ENCODE measurements at regions of chr3 and their contacts with region 1.

Region 1: DNA sequence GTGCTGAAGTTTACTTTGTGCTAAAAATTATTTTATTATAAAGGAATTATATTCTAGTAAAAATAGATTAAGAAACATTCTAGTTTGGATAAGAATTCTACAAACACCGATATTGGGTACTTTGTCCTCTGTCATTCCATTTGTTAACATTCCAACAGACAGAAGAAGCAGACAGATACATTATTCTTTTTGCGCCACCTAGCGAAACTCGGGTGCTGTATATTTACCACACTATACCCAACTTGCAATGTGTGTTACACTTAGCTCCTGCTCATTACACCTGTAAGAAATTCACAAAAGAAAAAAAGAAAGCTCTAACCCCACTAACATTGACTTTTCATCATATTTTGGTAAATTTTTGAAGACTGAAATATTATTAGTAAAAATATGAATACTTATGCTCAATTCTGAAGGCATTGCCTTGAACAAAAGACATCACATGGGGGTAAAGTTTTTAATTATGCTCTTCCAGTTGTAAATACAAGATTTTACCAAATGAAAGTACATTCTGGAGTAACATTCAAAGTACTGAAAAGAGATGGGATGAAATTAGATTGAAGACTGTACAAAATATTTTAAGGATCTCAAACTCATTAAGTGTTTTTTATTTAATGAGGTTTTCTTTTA is 136.5 kb upstream of the MLF1 start:
- DNase-seq: peak; percentile 21
- H3K4me3 ChIP-seq: no peak overlapping the region
- H3K27ac ChIP-seq: no peak overlapping the region
- H3K27me3 ChIP-seq: no peaks in the 10 kb centered on the region
- CTCF ChIP-seq: peak; percentile 83

Region 2: DNA sequence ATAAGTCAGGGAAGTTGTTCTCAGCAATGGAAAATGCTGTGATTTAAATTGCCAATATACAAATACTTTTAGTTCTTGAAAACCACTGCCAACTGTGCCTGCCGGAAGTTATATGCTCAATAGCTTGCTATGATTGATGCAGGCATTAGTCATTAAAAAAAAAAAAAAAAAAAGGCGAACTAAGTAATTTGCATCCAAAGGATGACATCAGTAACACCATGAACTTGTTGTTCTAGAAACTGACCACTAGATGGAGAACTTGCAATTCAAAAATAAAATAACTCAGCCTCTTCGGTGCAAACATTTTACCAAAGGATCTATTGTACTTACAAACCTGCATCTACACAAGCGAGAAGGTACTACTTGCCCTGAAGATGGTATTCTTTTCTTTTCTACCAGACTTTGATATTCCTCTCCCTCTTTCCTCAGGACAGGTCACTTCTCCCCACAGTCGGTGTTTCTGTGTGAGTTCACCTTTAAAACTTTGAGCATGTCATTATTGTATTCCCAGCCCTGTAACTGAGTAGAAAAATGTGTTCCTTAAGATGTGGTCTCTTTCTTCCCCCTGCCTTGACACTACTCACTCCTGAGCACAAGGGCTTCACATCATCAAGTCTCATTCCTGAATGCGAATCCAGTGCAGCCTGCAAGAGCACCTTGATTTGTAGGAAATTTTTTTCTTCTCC is 816.3 kb before region 1 on chr3:
- CTCF ChIA-PET with region 1: interaction called, 22 read pairs
- POLR2A ChIA-PET with region 1: no interaction called
- DNase-seq: peak; percentile 18
- H3K4me3 ChIP-seq: no peak overlapping the region
- H3K27ac ChIP-seq: no peak overlapping the region
- H3K27me3 ChIP-seq: peaks cover 8% of the 10 kb centered on the region
- CTCF ChIP-seq: peak; percentile 68

Region 3: DNA sequence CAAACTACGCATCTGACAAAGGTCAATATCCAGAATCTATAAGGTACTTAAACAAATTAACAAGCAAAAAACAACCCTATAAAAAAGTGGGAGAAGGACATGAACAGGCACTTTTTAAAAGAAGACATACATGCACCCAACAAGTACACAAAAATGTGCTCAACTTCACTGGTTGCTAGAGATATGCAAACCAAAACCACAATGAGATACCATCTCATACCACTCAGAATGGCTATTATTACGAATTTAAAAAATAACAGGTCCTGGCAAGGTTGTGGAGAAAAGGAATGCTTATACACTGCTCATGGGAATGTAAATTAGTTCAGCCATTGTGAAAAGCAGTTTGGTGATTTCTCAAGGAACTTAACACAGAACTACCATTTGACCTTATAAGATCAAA is 39.1 kb before region 1 on chr3:
- CTCF ChIA-PET with region 1: interaction called, 10 read pairs
- POLR2A ChIA-PET with region 1: no interaction called
- DNase-seq: no peak
- H3K4me3 ChIP-seq: no peak overlapping the region
- H3K27ac ChIP-seq: no peak overlapping the region
- H3K27me3 ChIP-seq: no peaks in the 10 kb centered on the region
- CTCF ChIP-seq: no peak

Region 4: DNA sequence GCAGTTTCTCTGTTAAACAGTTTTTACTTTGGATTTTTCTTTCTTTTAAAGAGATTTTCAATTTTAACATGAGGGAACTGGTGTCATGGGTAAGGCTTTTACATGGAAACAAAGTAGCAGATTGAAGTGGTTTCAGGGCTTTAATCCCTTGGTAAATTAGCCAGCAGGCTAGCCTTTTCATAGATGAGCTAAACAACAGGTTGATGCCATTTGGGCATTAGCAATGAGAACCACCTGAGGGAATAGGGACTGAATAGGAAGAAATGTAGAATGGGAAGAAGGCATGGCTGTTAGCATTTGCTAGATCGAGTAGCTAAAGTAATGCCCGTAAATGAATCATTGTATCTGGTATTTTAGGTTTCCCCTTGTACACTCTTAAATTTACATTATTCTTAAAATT is 29.0 kb before region 1 on chr3:
- CTCF ChIA-PET with region 1: interaction called, 12 read pairs
- POLR2A ChIA-PET with region 1: no interaction called
- DNase-seq: no peak
- H3K4me3 ChIP-seq: no peak overlapping the region
- H3K27ac ChIP-seq: no peak overlapping the region
- H3K27me3 ChIP-seq: no peaks in the 10 kb centered on the region
- CTCF ChIP-seq: no peak

Region 5: GRCh38 chr3:158420654-158421396 is 13.7 kb before region 1 on chr3:
- CTCF ChIA-PET with region 1: interaction called, 10 read pairs
- POLR2A ChIA-PET with region 1: no interaction called
- DNase-seq: peak; percentile 39
- H3K4me3 ChIP-seq: no peak overlapping the region
- H3K27ac ChIP-seq: no peak overlapping the region
- H3K27me3 ChIP-seq: no peaks in the 10 kb centered on the region
- CTCF ChIP-seq: no peak

Region 6: DNA sequence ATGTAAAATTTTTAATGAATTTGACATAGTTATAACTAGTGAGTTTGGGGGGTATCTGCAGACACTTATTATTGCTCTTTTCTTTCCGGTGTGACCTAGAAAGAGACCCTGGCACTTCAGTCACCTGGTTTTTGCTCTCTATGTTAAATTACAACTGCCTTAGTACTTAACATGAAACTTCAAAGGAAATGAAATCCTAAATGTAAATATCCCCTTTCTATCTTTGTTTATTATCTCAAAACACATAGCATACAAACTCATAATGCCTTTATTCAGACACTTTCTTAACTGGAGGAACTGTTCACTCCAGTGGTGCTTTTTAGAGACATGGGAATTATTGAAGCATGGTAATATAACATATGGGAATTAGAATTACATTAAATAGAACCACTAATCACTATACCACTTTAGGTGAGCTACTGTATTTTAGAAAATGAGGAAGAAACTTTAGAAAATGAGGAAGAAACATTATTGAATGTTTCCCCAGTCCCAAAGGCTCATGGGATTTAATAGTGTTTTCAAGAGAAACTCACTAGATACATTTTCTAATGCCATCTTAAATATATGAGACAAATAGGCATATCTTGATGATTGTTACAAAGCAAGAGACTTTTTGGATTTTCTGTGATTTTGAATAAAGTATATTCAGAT is 17.0 kb after region 1 on chr3:
- CTCF ChIA-PET with region 1: interaction called, 22 read pairs
- POLR2A ChIA-PET with region 1: no interaction called
- DNase-seq: no peak
- H3K4me3 ChIP-seq: no peak overlapping the region
- H3K27ac ChIP-seq: no peak overlapping the region
- H3K27me3 ChIP-seq: no peaks in the 10 kb centered on the region
- CTCF ChIP-seq: no peak

Region 7: GRCh38 chr3:158532099-158532734 is 97.7 kb after region 1 on chr3:
- CTCF ChIA-PET with region 1: interaction called, 12 read pairs
- POLR2A ChIA-PET with region 1: no interaction called
- DNase-seq: peak; percentile 23
- H3K4me3 ChIP-seq: no peak overlapping the region
- H3K27ac ChIP-seq: no peak overlapping the region
- H3K27me3 ChIP-seq: no peaks in the 10 kb centered on the region
- CTCF ChIP-seq: peak; percentile 66